ENCODE measurements at regions of chr22 and their contacts with region 1.

Region 1: GRCh38 chr22:41397143-41397811 is 15.5 kb downstream of the TEF start:
- DNase-seq: no peak
- ATAC-seq: no peak
- H3K4me3 ChIP-seq: no peak overlapping the region
- H3K27ac ChIP-seq: no peak overlapping the region
- H3K4me1 ChIP-seq: peaks cover 8% of the 10 kb centered on the region
- H3K27me3 ChIP-seq: no peaks in the 10 kb centered on the region
- CTCF ChIP-seq: no peak

Region 2: DNA sequence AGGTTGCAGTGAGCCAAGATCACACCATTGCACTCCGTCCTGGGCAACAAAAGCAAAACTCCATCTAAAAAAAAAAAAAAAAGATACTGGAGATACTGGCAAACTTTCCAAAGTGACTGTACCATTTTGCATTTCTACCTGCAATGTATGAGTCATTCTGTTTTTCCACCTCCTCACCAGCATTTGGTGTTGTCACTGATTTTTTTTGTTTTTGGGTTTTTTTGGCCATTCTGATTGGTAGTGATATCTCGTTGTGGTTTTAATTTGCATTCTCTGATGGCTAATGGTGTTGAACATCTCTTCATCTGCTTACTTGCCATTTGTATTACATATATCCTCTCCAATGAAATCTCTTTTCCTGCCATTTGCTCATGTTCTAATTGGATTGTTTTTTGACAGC is 458.1 kb before region 1 on chr22:
- CTCF ChIA-PET with region 1: interaction called, 10 read pairs
- POLR2A ChIA-PET with region 1: no interaction called
- intact Hi-C with region 1: no loop called
- DNase-seq: no peak
- ATAC-seq: no peak
- H3K4me3 ChIP-seq: no peak overlapping the region
- H3K27ac ChIP-seq: no peak overlapping the region
- H3K4me1 ChIP-seq: no peaks in the 10 kb centered on the region
- H3K27me3 ChIP-seq: no peaks in the 10 kb centered on the region
- CTCF ChIP-seq: no peak